ENCODE measurements at regions of chr6 and their contacts with region 1.

Region 1: GRCh38 chr6:32940656-32941213 is at the start of gene HLA-DMB:
- DNase-seq: no peak
- ATAC-seq: peak; percentile 97 to 100 (median 97)
- H3K4me3 ChIP-seq: peak within 1 kb of the TSS; percentile 63
- H3K27ac ChIP-seq: peak within 1 kb of the TSS; percentile 50
- H3K4me1 ChIP-seq: peaks cover 4% of the 10 kb centered on the region
- H3K27me3 ChIP-seq: no peaks in the 10 kb centered on the region
- CTCF ChIP-seq: no peak
- total RNA-seq, gene HLA-DMB: 1.4 to 7.6 (median 3.6) TPM

Region 2: DNA sequence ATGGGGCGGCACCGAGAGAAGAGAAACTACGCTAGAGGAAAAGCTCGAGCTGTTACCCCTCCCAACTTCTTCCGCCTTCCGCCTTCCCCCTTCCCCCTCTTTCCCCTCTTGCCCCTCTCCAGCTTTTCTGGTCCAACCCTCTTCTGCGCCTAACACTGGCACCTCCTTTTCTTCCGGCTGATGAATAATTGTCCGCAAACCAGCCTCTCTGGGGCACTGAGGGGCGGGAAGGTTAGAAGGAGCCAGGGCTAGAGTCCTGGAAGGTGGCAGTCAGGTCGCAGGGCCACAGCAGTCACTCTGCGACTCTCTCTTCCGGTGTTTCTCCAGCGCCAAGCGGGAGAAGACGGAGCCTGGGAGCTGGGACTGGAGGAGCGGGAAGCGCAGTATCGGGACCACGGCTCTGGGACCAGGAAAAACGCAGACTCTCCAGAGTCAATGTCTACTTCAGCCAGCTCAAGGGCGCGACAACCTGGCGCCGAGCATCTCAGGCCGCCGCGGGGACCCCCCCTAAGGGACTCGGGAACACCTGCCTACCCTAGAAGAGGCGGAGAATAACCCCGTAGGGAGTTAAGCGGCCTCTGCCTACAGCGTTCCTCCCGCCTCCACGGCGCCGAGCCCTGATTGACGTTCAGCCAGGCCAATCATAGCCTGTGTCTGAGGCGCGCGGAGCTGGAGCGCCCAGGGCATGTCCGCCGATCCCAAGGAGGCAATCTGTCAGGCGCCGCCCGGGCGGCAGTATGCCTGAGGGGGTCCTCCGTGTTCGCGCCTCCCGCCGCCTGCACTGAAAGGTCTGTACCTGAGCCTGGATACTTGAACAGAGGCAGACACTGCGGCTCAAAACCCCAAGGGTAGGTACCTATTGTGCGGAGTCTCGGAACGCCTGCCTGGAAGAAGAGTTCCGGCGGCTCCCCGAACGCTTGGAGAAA is 46.4 kb before region 1 on chr6:
- intact Hi-C with region 1: loop called (anchors 5 kb)
- DNase-seq: peak; percentile 92 to 95
- ATAC-seq: peak; percentile 100
- H3K4me3 ChIP-seq: peak overlapping the region; percentile 72
- H3K27ac ChIP-seq: peak overlapping the region; percentile 68
- H3K4me1 ChIP-seq: no peaks in the 10 kb centered on the region
- H3K27me3 ChIP-seq: no peaks in the 10 kb centered on the region
- CTCF ChIP-seq: no peak

Measured in psoas muscle (tissue), 8 donors.